Activated T-helper 1 cell treated with anti-CD3 and anti-CD28 coated beads, Interleukin-12 subunit alpha, Interleukin-12 subunit beta, Interleukin-2, Interleukin-4 antibody, amounts not matched to agents 30 ng/mL and 10 ng/mL and 1 ng/mL, durations not matched to agents 14 hours and 24 hours and 36 hours (primary cell): ENCODE measurements at regions of chr2 and their contacts with region 1.

Region 1: DNA sequence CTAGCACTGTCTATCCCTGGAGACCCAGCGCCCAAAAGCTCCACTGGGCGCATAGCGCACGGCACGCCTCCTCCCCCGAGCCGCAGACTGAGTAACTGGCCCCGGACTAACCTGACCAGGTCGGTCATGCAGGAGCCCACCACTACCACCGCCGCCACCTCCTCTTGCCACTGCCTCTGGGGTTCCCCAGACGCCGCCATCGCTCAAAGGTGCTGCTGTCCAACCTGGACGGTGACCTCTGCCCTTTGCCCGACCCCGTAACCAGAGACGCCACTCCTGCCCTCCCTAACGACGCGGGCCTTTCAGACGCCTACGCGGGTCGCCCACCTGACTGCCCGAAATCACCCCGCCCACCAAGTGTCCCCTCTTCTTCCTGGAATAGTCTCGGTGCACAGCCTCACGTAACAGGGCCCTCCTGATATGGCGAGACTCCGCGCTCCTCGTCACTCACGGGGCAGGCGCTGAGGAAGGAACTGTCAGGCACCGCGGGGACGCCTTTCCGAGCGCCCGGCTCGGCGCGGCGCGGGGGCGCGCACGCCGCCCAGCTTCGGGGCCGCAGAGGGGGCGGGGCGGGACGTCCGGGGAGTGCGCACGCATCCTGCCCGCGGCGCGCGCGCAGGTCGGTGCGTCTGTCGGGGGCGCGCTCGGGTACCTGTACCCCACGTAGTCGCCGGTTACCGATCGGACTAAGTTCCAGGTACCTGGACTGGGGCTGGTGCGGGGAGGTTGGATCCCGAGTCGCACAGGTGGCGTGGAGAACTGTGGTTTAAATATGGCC is at the starts of genes BABAM2 and RBKS:
- DNase-seq: peak; percentile 88
- H3K4me3 Mint-ChIP-seq: peak within 1 kb of the TSS; percentile 93
- H3K27ac Mint-ChIP-seq: peak within 1 kb of the TSS; percentile 99
- H3K4me1 Mint-ChIP-seq: peaks cover 62% of the 10 kb centered on the region
- H3K27me3 Mint-ChIP-seq: no peaks in the 10 kb centered on the region
- total RNA-seq, gene BABAM2: 46.3 and 46.6 TPM in 2 replicates
- total RNA-seq, gene RBKS: 0.76 and 0.83 TPM in 2 replicates

Region 2: DNA sequence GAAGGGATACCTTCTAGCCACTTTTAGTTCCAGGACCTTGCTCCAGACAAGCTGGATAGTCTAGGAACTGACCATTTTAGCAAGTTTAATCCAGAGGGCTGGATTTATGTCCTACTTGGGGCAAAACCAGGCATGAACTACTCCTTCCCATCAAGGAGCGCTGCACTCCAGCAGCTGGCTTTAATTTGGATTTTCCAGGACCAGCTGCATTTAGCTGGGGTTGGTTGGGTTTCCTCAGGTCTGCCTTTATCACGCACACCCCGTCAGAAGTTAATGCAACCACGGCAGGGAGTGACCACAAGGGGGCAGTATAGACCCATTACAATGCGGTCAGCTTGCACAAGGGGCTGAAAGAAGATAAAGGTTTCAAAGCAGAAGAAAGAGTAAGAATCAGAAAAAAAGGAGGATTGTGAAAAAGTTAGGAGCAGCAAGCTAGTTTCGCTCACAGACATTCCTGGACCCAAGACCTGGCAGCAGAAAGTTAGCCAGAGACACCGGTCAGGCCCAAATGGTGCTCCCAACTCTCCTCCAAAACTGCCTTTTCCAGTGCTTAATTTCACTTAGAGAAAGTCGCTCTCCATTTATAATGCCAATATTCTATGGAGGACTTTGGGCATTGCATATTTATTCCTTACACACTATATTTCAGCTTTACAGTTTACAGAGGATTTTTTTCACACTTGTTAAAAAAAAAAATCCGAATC is 186.5 kb before region 1 on chr2:
- intact Hi-C with region 1: loop called (anchors 5 kb)
- DNase-seq: peak; percentile 74
- H3K4me3 Mint-ChIP-seq: no peak overlapping the region
- H3K27ac Mint-ChIP-seq: no peak overlapping the region
- H3K4me1 Mint-ChIP-seq: peaks cover 15% of the 10 kb centered on the region
- H3K27me3 Mint-ChIP-seq: no peaks in the 10 kb centered on the region

Region 3: DNA sequence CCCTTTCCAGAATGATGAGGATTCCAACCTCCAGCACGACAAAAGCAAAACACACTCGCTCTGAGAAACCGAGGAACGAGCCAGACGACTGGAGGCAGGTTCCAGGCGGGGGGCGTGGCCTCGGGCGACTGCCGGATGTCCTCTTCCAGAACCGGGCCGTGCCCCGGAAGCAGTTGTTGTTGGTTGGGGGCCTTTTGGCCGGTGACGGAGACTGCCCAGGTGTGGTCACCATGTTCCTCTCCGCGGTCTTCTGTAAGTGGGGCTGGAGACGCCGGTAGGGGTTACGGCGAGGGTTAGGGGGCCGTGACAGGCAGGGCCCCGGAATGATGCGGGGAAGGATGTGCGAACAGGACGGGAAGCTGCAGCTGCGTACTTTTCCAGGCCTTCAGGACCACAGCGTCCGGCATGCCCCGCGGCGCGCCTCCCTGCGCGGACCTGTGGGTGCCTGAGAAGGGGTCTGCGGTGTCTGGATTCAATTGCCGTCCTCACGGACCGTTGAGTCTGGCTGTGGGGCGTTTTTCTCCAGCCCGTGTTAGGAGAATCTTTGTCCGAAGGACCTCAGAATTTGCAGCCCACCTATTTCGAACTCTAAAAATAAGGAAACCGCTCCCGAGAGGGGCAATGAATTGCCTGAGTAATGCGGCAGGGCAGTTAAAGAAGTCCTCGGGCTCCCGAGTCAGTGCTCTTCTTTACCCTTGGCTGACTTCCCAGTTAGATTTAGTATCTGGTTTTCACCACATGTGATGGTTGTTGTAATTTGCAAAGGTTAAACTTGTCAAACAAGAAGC is 118.6 kb before region 1 on chr2 and contains the start of gene MRPL33:
- intact Hi-C with region 1: loop called (anchors 1 kb)
- DNase-seq: peak; percentile 86
- H3K4me3 Mint-ChIP-seq: peak within 1 kb of the TSS; percentile 99
- H3K27ac Mint-ChIP-seq: peak within 1 kb of the TSS; percentile 96
- H3K4me1 Mint-ChIP-seq: peaks cover 47% of the 10 kb centered on the region
- H3K27me3 Mint-ChIP-seq: no peaks in the 10 kb centered on the region
- total RNA-seq, gene MRPL33: 55.4 and 55.9 TPM in 2 replicates

Region 4: GRCh38 chr2:27860111-27860510 is 30.2 kb before region 1 on chr2:
- intact Hi-C with region 1: loop called (anchors 5 kb)
- DNase-seq: no peak
- H3K4me3 Mint-ChIP-seq: no peak overlapping the region
- H3K27ac Mint-ChIP-seq: peak overlapping the region; percentile 31
- H3K4me1 Mint-ChIP-seq: peaks cover 26% of the 10 kb centered on the region
- H3K27me3 Mint-ChIP-seq: peaks cover 2% of the 10 kb centered on the region

Region 5: GRCh38 chr2:27903649-27904404 is 13.5 kb after region 1 on chr2:
- intact Hi-C with region 1: loop called (anchors 1 kb)
- DNase-seq: no peak
- H3K4me3 Mint-ChIP-seq: no peak overlapping the region
- H3K27ac Mint-ChIP-seq: peak overlapping the region; percentile 21
- H3K4me1 Mint-ChIP-seq: peaks cover 54% of the 10 kb centered on the region
- H3K27me3 Mint-ChIP-seq: no peaks in the 10 kb centered on the region